Activated CD4-positive, alpha-beta T cell treated with anti-CD3 and anti-CD28 coated beads, Interleukin-2, amount 10 ng/mL, durations not matched to agents 24 days and 14 days (primary cell): ENCODE measurements at regions of chr13 and their contacts with region 1.

Region 1: GRCh38 chr13:98598043-98598442 is 21.1 kb upstream of the STK24 start:
- DNase-seq: no peak
- H3K4me3 Mint-ChIP-seq: no peak overlapping the region
- H3K27ac Mint-ChIP-seq: peak overlapping the region; percentile 51
- H3K4me1 Mint-ChIP-seq: peaks cover 14% of the 10 kb centered on the region
- H3K27me3 Mint-ChIP-seq: peaks cover 12% of the 10 kb centered on the region

Region 2: DNA sequence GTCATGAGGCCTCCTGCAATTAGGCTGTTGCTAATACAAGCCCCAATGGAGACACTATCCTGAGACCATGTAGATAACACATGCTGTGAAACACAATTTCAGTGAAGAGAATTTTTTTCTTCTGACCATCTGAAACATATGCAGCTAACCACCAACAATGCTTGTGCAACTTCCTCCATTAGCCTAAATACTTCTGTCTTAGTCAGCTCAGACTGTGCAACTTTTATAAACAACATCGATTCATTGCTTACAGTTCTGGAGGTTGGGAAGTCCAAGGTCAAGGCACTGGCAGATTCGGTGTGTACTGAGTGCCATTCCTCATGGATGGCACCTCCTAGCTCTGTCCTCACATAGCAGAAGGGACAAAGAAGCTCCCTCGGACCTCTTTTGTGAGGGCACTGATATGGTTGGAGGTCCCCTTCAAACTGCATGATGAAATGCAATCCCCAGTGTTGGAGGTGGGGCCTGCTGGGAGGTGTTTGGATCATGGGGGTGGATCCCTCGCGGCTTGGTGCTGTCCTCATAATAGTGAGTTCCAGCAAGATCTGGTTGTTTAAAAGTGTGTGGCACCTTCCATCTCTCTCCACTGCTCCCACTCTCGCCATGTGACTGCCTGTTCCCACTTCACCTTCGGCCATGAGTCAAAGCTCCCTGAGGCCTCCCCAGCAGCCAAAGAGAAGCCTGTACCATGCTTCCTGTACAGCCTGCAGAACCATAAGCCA is 48.9 kb before region 1 on chr13:
- intact Hi-C with region 1: loop called (anchors 1 kb)
- DNase-seq: no peak
- H3K4me3 Mint-ChIP-seq: peak overlapping the region; percentile 15
- H3K27ac Mint-ChIP-seq: peak overlapping the region; percentile 76
- H3K4me1 Mint-ChIP-seq: peaks cover 61% of the 10 kb centered on the region
- H3K27me3 Mint-ChIP-seq: no peaks in the 10 kb centered on the region

Region 3: DNA sequence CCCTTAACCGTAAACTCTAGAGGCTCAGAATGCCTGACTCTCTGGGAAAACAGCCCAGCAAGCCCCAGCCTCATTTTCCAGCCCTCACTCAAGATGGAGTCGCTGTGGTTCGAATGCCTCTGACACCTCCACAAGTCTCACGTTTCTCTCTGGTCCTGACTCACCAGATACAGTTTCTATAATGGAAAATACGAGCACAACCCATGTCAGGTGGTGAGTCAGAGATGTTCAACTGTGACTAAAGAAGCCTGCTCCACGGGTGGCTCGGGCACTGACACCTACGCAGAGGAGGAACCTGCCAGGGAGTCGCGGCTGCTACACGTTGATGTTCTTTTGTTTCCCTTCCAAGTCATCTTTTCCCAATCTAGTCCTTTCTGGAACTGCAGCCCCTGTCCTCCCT is 66.0 kb after region 1 on chr13:
- intact Hi-C with region 1: loop called (anchors 5 kb)
- DNase-seq: peak; percentile 73
- H3K4me3 Mint-ChIP-seq: peak overlapping the region; percentile 5
- H3K27ac Mint-ChIP-seq: peak overlapping the region; percentile 82
- H3K4me1 Mint-ChIP-seq: peaks cover 14% of the 10 kb centered on the region
- H3K27me3 Mint-ChIP-seq: peaks cover 18% of the 10 kb centered on the region